Body of pancreas (tissue), 4 donors: ENCODE measurements at regions of chr12 and their contacts with region 1.

Region 1: DNA sequence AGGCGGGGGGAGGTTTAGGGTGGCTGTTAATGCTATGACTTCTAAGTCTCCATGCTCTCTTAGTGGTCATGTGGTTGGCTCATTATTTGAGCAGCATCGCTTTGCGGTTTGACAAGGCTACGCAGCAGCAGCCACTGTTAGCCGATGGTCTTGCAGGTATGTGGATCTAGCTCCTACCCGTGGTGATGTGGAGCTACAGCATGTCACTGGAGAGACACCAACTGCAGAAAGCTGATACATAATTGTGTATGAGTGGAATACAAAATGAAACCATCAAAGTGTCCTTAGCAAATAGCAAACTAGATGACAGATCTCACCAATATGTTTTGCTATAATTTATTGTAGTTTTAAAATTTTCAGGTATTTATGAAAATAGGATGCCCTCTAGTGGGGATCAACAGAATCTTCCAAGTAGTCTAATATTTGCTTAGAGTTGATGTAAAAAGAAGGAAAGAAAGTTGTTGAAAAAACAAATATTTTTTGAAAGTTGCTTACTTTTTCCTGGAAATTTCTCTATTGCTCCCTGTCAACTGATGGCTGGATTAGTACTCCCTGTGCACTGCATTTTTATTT is 94.9 kb downstream of the NAV3 start:
- DNase-seq: peak; percentile 72 to 85 (median 80)
- ATAC-seq: peak; percentile 99
- H3K4me3 ChIP-seq: no peak overlapping the region
- H3K27ac ChIP-seq: no peak overlapping the region
- H3K4me1 ChIP-seq: no peaks in the 10 kb centered on the region
- H3K27me3 ChIP-seq: no peaks in the 10 kb centered on the region
- CTCF ChIP-seq: peak; percentile 78 to 99 (median 94)
- POLR2A ChIP-seq: no peak

Region 2: GRCh38 chr12:77724367-77724957 is 201.2 kb before region 1 on chr12:
- intact Hi-C with region 1: loop called (anchors 10 kb)
- DNase-seq: peak in 2 of 4 donors; percentile 19 to 33
- ATAC-seq: peak; percentile 79
- H3K4me3 ChIP-seq: no peak overlapping the region
- H3K27ac ChIP-seq: no peak overlapping the region
- H3K4me1 ChIP-seq: no peaks in the 10 kb centered on the region
- H3K27me3 ChIP-seq: no peaks in the 10 kb centered on the region
- CTCF ChIP-seq: peak in 6 of 7 experiments; percentile 51 to 88 (median 80)
- POLR2A ChIP-seq: no peak

Region 3: GRCh38 chr12:77777274-77777673 is 148.3 kb before region 1 on chr12:
- intact Hi-C with region 1: no loop called
- DNase-seq: no peak
- ATAC-seq: no peak
- H3K4me3 ChIP-seq: no peak overlapping the region
- H3K27ac ChIP-seq: no peak overlapping the region
- H3K4me1 ChIP-seq: no peaks in the 10 kb centered on the region
- H3K27me3 ChIP-seq: no peaks in the 10 kb centered on the region
- CTCF ChIP-seq: no peak
- POLR2A ChIP-seq: no peak

Region 4: DNA sequence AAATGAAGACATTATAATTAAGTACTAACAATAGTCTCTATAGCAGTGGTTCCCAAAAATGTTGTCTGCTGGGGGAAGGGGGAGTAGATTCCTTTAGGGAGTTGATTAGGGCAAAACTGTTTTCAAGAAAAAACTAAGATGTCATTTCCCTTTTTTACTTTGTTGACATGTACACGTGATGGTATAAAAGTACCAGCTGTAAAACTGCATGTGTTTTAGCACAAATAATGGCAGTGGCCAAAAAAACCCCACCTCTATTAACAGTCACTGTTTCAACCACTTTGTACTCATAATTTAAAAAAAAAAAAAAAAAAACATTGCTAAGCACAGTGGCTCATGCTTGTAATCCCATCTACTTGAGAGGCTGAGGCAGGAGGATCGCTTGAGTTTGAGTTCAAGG is 1947.6 kb after region 1 on chr12:
- intact Hi-C with region 1: no loop called
- DNase-seq: no peak
- ATAC-seq: no peak
- H3K4me3 ChIP-seq: no peak overlapping the region
- H3K27ac ChIP-seq: no peak overlapping the region
- H3K4me1 ChIP-seq: peaks cover 3% of the 10 kb centered on the region
- H3K27me3 ChIP-seq: no peaks in the 10 kb centered on the region
- CTCF ChIP-seq: no peak
- POLR2A ChIP-seq: no peak